ENCODE measurements at regions of chr14 and their contacts with region 1.

Region 1: GRCh38 chr14:96204151-96205058 is at the start of gene BDKRB2:
- DNase-seq: peak; percentile 57 to 86
- H3K4me3 ChIP-seq: peak within 1 kb of the TSS; percentile 59
- H3K27ac ChIP-seq: peak within 1 kb of the TSS; percentile 68
- H3K4me1 ChIP-seq: peaks cover 40% of the 10 kb centered on the region
- H3K27me3 ChIP-seq: no peaks in the 10 kb centered on the region
- CTCF ChIP-seq: no peak
- total RNA-seq, gene BDKRB2: 0.28 and 0.43 TPM in 2 replicates

Region 2: GRCh38 chr14:96225745-96226151 is 21.3 kb after region 1 on chr14:
- CTCF ChIA-PET with region 1: no interaction called
- POLR2A ChIA-PET with region 1: interaction called, 26 read pairs
- intact Hi-C with region 1: no loop called
- DNase-seq: peak; percentile 45 to 70
- H3K4me3 ChIP-seq: no peak overlapping the region
- H3K27ac ChIP-seq: peak overlapping the region; percentile 53
- H3K4me1 ChIP-seq: peaks cover 22% of the 10 kb centered on the region
- H3K27me3 ChIP-seq: no peaks in the 10 kb centered on the region
- CTCF ChIP-seq: peak; percentile 46

Region 3: GRCh38 chr14:96268431-96269358 is 64.3 kb after region 1 on chr14:
- CTCF ChIA-PET with region 1: no interaction called
- POLR2A ChIA-PET with region 1: no interaction called
- intact Hi-C with region 1: loop called (anchors 5 kb)
- DNase-seq: peak in 1 of 2 experiments; percentile 80
- H3K4me3 ChIP-seq: no peak overlapping the region
- H3K27ac ChIP-seq: peak overlapping the region; percentile 82
- H3K4me1 ChIP-seq: peaks cover 54% of the 10 kb centered on the region
- H3K27me3 ChIP-seq: no peaks in the 10 kb centered on the region
- CTCF ChIP-seq: no peak